CD8-positive, alpha-beta T cell (primary cell): ENCODE measurements at regions of chr4 and their contacts with region 1.

Region 1: DNA sequence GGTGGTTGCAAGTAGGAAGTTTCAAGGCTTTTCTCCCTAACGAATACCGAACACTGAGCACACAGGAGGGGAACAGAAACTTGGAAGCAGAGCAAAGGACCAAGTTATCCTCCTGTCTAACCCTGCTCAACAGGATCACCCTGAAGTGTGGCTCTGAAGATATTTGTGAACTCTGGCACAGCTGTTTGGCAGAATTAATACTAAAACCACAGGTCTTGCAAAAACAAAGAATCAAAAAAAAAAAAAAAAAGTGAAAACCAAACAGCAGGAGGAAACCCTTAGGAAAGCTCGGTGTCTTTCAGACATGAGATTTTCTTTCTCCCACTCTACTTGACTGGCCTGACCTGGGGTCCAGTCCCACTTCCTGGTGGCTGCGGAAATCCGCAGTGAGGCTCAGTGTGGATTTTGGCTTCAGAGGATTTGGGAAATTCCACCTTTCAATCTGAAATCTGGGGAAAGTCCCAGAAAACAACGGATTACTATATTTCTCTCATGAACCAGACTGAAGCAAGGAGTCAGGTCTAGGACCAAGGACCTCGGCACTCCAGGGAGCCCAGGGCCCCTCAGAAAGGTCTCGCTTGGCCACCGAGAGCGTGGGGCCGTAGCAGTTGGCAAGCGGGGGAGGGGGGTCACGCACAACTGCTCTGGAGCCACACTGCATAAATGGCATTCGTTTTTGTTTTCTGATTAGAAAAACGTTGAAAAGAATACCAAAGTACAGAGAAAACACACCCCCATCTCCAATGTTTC is 867 bp downstream of the TIFA start:
- DNase-seq: peak in 2 of 9 experiments; percentile 65 to 78
- ATAC-seq: no peak
- H3K4me3 ChIP-seq: peak overlapping the region; percentile 71 to 94
- H3K4me3 Mint-ChIP-seq: peak overlapping the region; percentile 95
- H3K27ac ChIP-seq: peak overlapping the region; percentile 80 to 82
- H3K27ac Mint-ChIP-seq: peak overlapping the region; percentile 93
- H3K4me1 ChIP-seq: peaks cover 27% of the 10 kb centered on the region
- H3K4me1 Mint-ChIP-seq: peaks cover 78% of the 10 kb centered on the region
- H3K27me3 ChIP-seq: no peaks in the 10 kb centered on the region
- H3K27me3 Mint-ChIP-seq: no peaks in the 10 kb centered on the region
- CTCF ChIP-seq: no peak

Region 2: DNA sequence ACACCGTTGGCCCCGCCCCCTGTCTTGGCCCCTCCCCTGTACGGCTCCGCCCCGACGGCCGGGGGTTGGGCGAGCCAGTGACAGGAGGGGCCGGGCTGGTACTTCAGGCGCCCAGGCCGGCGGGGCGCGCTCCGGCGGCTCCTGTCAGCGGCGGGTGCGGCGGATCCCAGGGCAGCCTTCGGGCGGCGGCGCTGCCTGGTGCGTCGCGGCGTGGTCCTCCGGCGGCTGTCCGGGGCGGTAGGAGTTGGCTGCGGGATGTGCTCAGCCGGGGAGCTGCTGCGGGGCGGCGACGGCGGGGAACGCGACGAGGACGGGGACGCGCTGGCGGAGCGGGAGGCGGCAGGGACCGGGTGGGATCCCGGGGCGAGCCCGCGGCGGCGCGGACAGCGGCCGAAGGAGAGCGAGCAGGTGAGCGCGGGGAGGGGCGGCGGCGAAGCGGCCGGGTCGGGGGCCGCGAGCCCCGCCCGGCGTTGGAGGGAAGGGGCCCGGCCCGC is 139.5 kb before region 1 on chr4 and contains the start of gene FAM241A:
- CTCF ChIA-PET with region 1: no interaction called
- POLR2A ChIA-PET with region 1: interaction called, 4 read pairs
- intact Hi-C with region 1: loop called (anchors 1 to 5 kb)
- DNase-seq: peak; percentile 84 to 95 (median 90)
- ATAC-seq: peak; percentile 96
- H3K4me3 ChIP-seq: peak within 1 kb of the TSS; percentile 75 to 78
- H3K4me3 Mint-ChIP-seq: peak within 1 kb of the TSS; percentile 98
- H3K27ac ChIP-seq: peak within 1 kb of the TSS; percentile 69
- H3K27ac Mint-ChIP-seq: peak within 1 kb of the TSS; percentile 94
- H3K4me1 ChIP-seq: peaks cover 10% of the 10 kb centered on the region
- H3K4me1 Mint-ChIP-seq: peaks cover 29% of the 10 kb centered on the region
- H3K27me3 ChIP-seq: no peaks in the 10 kb centered on the region
- H3K27me3 Mint-ChIP-seq: no peaks in the 10 kb centered on the region
- CTCF ChIP-seq: no peak
- total RNA-seq, gene FAM241A: 0.67 to 0.90 TPM

Region 3: GRCh38 chr4:112266821-112267220 is 18.0 kb before region 1 on chr4:
- CTCF ChIA-PET with region 1: interaction called, 7 read pairs
- POLR2A ChIA-PET with region 1: interaction called, 5 read pairs
- intact Hi-C with region 1: loop called in 1 of 2 experiments (anchors 1 kb)
- DNase-seq: peak in 2 of 9 experiments; percentile 41 to 52
- ATAC-seq: peak; percentile 36
- H3K4me3 ChIP-seq: no peak overlapping the region
- H3K4me3 Mint-ChIP-seq: no peak overlapping the region
- H3K27ac ChIP-seq: no peak overlapping the region
- H3K27ac Mint-ChIP-seq: no peak overlapping the region
- H3K4me1 ChIP-seq: no peaks in the 10 kb centered on the region
- H3K4me1 Mint-ChIP-seq: no peaks in the 10 kb centered on the region
- H3K27me3 ChIP-seq: no peaks in the 10 kb centered on the region
- H3K27me3 Mint-ChIP-seq: no peaks in the 10 kb centered on the region
- CTCF ChIP-seq: peak; percentile 39

Region 4: DNA sequence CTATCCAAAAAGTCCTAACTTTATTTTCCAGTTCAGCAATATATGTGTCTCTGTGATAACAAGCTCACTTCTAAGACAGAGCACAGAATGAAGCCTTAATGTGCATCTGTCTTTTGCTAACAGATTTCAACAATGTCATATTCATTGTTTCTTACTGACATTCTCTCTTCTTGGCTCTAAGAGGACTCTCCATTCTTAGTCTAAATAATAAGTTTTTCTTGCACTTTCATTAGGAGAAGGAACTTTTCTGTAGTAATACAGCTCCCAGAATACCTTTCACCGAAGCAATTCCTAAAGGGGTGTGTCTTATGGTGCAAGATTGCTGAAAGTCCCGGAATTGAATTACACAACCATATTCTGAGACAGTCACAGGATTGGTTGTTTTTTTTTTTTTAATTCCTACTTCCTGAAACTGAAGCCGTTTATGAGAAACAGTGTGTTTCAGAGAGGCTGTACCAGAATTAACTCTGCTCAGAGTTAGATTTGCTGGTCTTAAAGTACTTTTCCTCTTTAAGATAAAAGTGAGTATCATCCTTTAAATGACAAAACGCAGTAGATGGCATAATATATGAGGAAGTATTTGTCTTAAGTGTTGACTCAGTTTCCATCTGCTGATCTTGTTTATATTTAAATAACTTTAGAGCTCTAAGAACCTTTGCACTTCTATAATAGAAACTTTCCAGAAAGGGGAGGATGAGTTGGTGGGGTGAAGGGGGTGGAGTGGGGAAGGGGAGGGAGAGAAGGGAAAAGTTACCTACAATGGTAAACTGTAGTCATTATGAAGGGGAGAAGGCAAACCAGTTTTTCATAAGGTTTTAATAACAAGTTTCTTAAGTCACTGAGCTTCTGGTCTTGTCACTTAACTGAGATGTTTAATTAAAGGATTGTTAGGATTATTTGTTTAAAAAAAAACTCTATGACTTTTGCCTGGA is 12.4 kb after region 1 on chr4 and contains the start of gene ALPK1:
- CTCF ChIA-PET with region 1: interaction called, 5 read pairs
- POLR2A ChIA-PET with region 1: interaction called, 25 read pairs
- intact Hi-C with region 1: loop called in 1 of 2 experiments (anchors 1 kb)
- DNase-seq: peak in 2 of 9 experiments; percentile 53 to 72
- ATAC-seq: peak; percentile 90
- H3K4me3 ChIP-seq: peak within 1 kb of the TSS; percentile 9 to 21
- H3K4me3 Mint-ChIP-seq: peak within 1 kb of the TSS; percentile 85
- H3K27ac ChIP-seq: peak within 1 kb of the TSS; percentile 16 to 24
- H3K27ac Mint-ChIP-seq: peak within 1 kb of the TSS; percentile 87
- H3K4me1 ChIP-seq: peaks cover 26% of the 10 kb centered on the region
- H3K4me1 Mint-ChIP-seq: peaks cover 24% of the 10 kb centered on the region
- H3K27me3 ChIP-seq: no peaks in the 10 kb centered on the region
- H3K27me3 Mint-ChIP-seq: no peaks in the 10 kb centered on the region
- CTCF ChIP-seq: no peak
- total RNA-seq, gene ALPK1: 6.5 to 7.0 TPM

Region 5: DNA sequence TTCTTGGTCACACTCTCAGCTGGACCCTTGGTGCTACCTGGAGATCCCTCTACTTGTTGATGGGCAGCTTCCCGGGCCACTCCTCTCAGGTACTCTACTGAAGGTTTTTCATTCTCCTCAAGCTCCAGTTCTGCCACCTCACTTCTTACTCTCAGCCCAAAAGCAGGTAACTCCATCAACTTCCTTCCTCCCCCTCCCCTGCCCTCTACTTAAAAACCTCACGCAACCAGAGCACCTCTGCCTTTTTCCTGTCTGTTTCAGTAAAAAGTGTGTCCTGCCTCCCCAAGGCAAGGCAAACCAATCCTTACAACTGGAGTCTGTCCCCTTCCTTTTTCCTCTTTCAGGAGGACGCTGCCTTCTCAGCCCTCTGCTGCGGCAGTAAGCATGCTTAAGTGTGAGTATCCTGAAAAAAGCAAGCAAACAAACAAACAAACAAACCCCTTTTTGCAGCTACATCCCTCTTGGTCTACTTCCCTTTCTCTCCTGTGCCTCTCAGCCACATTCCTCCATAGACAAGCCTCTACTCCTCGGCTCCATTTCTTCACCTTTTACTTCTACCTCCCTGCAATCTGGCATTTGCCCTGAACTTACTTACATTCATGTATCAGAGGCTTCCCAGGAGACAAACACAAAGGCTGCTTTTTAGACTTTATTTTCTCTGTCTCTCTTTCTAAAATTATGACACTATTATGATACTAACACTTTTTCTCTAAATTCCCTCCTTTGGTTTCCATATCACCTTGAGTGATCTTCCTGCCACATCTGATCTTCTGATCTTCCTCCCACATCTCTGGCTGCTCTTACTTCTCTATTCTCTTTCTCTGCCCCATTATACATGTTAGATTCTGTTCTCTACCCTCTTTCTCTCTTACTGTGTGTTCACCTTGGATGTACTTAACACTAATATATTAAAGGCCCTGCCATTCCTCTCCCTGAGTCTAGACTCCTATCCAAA is 17.8 kb after region 1 on chr4:
- CTCF ChIA-PET with region 1: interaction called, 5 read pairs
- POLR2A ChIA-PET with region 1: interaction called, 25 read pairs
- intact Hi-C with region 1: loop called in 1 of 2 experiments (anchors 1 kb)
- DNase-seq: peak in 3 of 9 experiments; percentile 32 to 55 (median 52)
- ATAC-seq: peak; percentile 75
- H3K4me3 ChIP-seq: peak overlapping the region in 1 of 2 experiments; percentile 17
- H3K4me3 Mint-ChIP-seq: no peak overlapping the region
- H3K27ac ChIP-seq: peak overlapping the region; percentile 11 to 62
- H3K27ac Mint-ChIP-seq: no peak overlapping the region
- H3K4me1 ChIP-seq: peaks cover 35% of the 10 kb centered on the region
- H3K4me1 Mint-ChIP-seq: peaks cover 22% of the 10 kb centered on the region
- H3K27me3 ChIP-seq: no peaks in the 10 kb centered on the region
- H3K27me3 Mint-ChIP-seq: no peaks in the 10 kb centered on the region
- CTCF ChIP-seq: no peak

Region 6: DNA sequence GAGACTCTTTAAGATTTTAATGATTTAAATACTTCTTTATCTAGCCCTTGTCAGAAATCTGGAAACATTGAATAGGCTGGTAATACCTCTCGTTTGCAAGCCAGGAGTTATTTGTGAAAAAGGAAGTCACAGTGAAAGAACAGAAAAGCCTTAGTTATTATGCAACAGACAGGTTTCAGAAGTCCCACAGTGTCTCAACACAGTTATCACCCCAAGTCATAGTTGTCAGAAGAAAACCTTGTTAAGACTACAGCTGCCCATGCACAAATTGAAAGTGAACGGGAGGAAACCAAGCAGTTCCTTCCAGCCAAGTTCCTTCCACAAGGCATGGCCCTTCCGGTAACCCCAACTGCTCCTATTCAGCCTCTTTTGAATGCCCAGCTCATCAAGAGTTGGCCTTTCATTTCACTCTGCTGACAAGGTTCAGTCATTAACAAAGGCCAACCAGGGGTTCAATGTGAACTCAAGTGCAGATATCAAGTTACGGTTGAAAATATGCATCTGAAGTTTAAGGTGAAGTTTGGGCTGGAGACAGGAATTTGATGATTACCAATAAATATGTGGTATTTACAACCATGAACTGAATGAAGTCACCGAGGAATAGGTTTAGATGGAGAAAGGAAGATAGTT is 27.9 kb after region 1 on chr4:
- CTCF ChIA-PET with region 1: interaction called, 7 read pairs
- POLR2A ChIA-PET with region 1: interaction called, 23 read pairs
- intact Hi-C with region 1: loop called in 1 of 2 experiments (anchors 1 kb)
- DNase-seq: no peak
- ATAC-seq: no peak
- H3K4me3 ChIP-seq: no peak overlapping the region
- H3K4me3 Mint-ChIP-seq: no peak overlapping the region
- H3K27ac ChIP-seq: no peak overlapping the region
- H3K27ac Mint-ChIP-seq: no peak overlapping the region
- H3K4me1 ChIP-seq: no peaks in the 10 kb centered on the region
- H3K4me1 Mint-ChIP-seq: peaks cover 18% of the 10 kb centered on the region
- H3K27me3 ChIP-seq: no peaks in the 10 kb centered on the region
- H3K27me3 Mint-ChIP-seq: no peaks in the 10 kb centered on the region
- CTCF ChIP-seq: no peak

Region 7: GRCh38 chr4:112321776-112322684 is 37.2 kb after region 1 on chr4:
- CTCF ChIA-PET with region 1: interaction called, 7 read pairs
- POLR2A ChIA-PET with region 1: interaction called, 11 read pairs
- intact Hi-C with region 1: loop called in 1 of 2 experiments (anchors 1 kb)
- DNase-seq: peak; percentile 58 to 85 (median 76)
- ATAC-seq: peak; percentile 99
- H3K4me3 ChIP-seq: no peak overlapping the region
- H3K4me3 Mint-ChIP-seq: no peak overlapping the region
- H3K27ac ChIP-seq: no peak overlapping the region
- H3K27ac Mint-ChIP-seq: no peak overlapping the region
- H3K4me1 ChIP-seq: peaks cover 10% of the 10 kb centered on the region
- H3K4me1 Mint-ChIP-seq: peaks cover 5% of the 10 kb centered on the region
- H3K27me3 ChIP-seq: no peaks in the 10 kb centered on the region
- H3K27me3 Mint-ChIP-seq: no peaks in the 10 kb centered on the region
- CTCF ChIP-seq: peak; percentile 96

Region 8: GRCh38 chr4:112379306-112379705 is 94.5 kb after region 1 on chr4:
- CTCF ChIA-PET with region 1: no interaction called
- POLR2A ChIA-PET with region 1: no interaction called
- intact Hi-C with region 1: no loop called
- DNase-seq: no peak
- ATAC-seq: no peak
- H3K4me3 ChIP-seq: no peak overlapping the region
- H3K4me3 Mint-ChIP-seq: no peak overlapping the region
- H3K27ac ChIP-seq: no peak overlapping the region
- H3K27ac Mint-ChIP-seq: no peak overlapping the region
- H3K4me1 ChIP-seq: no peaks in the 10 kb centered on the region
- H3K4me1 Mint-ChIP-seq: no peaks in the 10 kb centered on the region
- H3K27me3 ChIP-seq: no peaks in the 10 kb centered on the region
- H3K27me3 Mint-ChIP-seq: no peaks in the 10 kb centered on the region
- CTCF ChIP-seq: no peak